MCF 10A (cell line): ENCODE measurements at regions of chr12 and their contacts with region 1.

Region 1: DNA sequence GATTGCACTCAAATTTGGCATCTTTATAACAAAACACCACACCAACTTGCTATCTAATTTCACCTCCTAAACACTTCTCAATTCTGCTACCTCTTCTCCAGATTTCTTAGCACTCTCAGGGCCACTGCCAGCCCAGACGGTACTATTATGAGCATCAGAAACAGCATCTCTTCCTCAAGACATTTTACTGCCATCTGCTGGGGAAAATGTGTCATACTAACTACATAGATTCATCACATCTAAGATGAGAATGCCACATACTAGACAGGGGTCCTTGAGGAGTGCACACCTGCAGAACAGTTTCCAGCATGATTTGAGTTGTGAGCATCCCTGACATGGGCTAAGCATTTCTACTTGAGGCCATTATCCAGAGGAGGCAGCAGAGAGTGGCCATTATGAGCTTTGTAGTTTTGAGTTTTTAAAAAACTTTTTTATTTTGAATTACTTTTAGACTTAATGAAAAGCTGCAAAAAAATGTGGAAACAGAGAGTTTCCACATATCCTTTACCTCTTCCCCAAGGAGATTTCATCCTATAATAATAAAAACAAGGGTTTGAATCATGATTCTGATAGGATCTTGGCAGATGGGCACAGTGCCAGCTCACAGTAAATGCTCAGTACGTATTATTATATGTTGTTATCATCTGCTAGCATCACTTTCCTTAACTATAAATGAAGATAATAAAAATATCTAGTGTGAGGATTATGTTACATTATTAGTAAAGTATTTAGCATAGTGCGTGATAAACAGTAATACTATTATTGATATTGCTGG is 15.2 kb upstream of the GRIP1 start:
- DNase-seq: peak; percentile 75
- H3K4me3 Mint-ChIP-seq: no peak overlapping the region
- H3K27ac Mint-ChIP-seq: no peak overlapping the region
- H3K4me1 Mint-ChIP-seq: no peaks in the 10 kb centered on the region
- H3K27me3 Mint-ChIP-seq: peaks cover 34% of the 10 kb centered on the region
- CTCF ChIP-seq: peak; percentile 68

Region 2: GRCh38 chr12:66269757-66270383 is 424.2 kb before region 1 on chr12:
- CTCF ChIA-PET with region 1: interaction called, 87 read pairs
- POLR2A ChIA-PET with region 1: no interaction called
- intact Hi-C with region 1: loop called (anchors 1 kb)
- DNase-seq: peak; percentile 54
- H3K4me3 Mint-ChIP-seq: no peak overlapping the region
- H3K27ac Mint-ChIP-seq: no peak overlapping the region
- H3K4me1 Mint-ChIP-seq: no peaks in the 10 kb centered on the region
- H3K27me3 Mint-ChIP-seq: peaks cover 2% of the 10 kb centered on the region
- CTCF ChIP-seq: peak; percentile 50

Region 3: DNA sequence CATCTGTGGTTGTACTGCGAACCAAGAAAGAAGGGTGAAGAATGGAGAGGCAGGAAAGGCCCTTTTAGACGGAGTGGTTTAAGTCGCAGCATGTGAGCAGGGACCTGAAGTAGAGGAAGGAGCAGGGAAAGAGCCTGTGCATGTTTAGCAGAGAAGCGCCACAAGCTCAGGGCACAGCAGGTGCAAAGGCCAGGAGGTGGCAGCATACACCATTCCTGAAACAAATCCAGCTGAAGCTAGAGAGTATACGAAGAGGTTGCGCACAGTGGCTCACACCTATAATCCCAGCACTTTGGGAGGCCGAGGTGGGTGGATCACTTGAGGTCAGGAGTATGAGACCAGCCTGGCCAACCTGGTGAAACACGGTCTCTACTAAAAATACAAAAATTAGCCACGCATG is 341.9 kb before region 1 on chr12:
- CTCF ChIA-PET with region 1: interaction called, 10 read pairs
- POLR2A ChIA-PET with region 1: no interaction called
- intact Hi-C with region 1: loop called (anchors 1 kb)
- DNase-seq: peak; percentile 41
- H3K4me3 Mint-ChIP-seq: no peak overlapping the region
- H3K27ac Mint-ChIP-seq: no peak overlapping the region
- H3K4me1 Mint-ChIP-seq: no peaks in the 10 kb centered on the region
- H3K27me3 Mint-ChIP-seq: no peaks in the 10 kb centered on the region
- CTCF ChIP-seq: peak; percentile 35

Region 4: DNA sequence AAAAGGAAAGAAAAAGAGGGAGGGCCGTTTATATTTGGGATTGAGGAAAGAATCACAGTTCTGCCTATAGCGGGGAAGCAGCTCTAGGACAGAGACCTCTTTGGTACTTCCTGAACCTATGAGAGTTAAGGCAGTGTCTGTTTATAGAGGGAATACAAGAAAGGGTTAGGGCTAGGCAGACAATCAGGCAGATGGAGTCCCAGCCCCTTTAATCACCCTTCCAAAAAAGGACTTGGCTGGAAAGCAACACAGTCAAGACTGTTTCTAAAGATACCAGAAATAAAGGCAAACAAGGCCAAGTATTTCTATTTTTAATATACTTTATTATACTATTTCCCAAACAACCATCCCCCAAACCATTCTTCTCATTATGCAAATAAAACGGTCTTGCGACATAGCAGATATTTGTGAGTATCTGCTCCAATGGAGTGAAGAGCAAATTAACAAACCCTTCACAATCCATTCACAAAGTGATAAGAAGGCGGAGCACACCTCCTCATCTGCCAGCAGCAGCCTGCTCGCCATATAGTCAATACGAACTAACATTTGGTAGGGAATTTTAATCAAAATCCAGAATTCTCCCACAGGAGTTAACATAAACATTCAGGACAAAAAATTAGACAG is 14.5 kb before region 1 on chr12:
- CTCF ChIA-PET with region 1: interaction called, 46 read pairs
- POLR2A ChIA-PET with region 1: no interaction called
- intact Hi-C with region 1: no loop called
- DNase-seq: no peak
- H3K4me3 Mint-ChIP-seq: no peak overlapping the region
- H3K27ac Mint-ChIP-seq: no peak overlapping the region
- H3K4me1 Mint-ChIP-seq: no peaks in the 10 kb centered on the region
- H3K27me3 Mint-ChIP-seq: peaks cover 62% of the 10 kb centered on the region
- CTCF ChIP-seq: no peak